ENCODE measurements at regions of chr2 and their contacts with region 1.

Region 1: DNA sequence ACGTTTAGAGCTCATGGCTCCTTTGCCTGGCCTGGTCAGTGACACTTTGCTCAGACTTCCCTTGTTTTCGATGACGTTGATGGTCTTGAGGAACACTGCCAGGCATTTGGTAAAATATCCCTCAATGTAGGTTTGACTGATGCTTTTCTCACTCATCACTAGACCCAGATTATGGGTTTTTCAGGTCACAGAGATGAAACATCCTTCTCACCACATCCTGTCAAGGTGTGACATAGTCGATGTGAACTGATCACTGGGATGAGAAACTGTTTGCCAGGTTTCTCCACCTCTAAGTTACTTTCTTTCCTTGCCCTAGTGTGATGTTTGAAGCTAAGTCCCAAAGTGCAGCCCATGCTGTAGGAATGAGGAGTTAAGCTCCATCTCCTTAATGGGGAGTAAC is 81.5 kb downstream of the AFF3 start:
- DNase-seq: peak; percentile 16
- H3K4me3 Mint-ChIP-seq: no peak overlapping the region
- H3K27ac Mint-ChIP-seq: peak overlapping the region; percentile 53
- H3K4me1 Mint-ChIP-seq: peaks cover 30% of the 10 kb centered on the region
- H3K27me3 Mint-ChIP-seq: peaks cover 9% of the 10 kb centered on the region

Region 2: GRCh38 chr2:100136310-100136709 is 75.4 kb after region 1 on chr2:
- CTCF ChIA-PET with region 1: no interaction called
- POLR2A ChIA-PET with region 1: no interaction called
- intact Hi-C with region 1: loop called (anchors 1 kb)
- DNase-seq: peak; percentile 15
- H3K4me3 Mint-ChIP-seq: no peak overlapping the region
- H3K27ac Mint-ChIP-seq: no peak overlapping the region
- H3K4me1 Mint-ChIP-seq: peaks cover 13% of the 10 kb centered on the region
- H3K27me3 Mint-ChIP-seq: peaks cover 18% of the 10 kb centered on the region

Region 3: GRCh38 chr2:100142393-100142792 is 81.5 kb after region 1 on chr2 and contains the start of gene AFF3:
- CTCF ChIA-PET with region 1: no interaction called
- POLR2A ChIA-PET with region 1: no interaction called
- intact Hi-C with region 1: loop called (anchors 2 kb)
- DNase-seq: peak; percentile 72
- H3K4me3 Mint-ChIP-seq: peak within 1 kb of the TSS; percentile 38
- H3K27ac Mint-ChIP-seq: peak within 1 kb of the TSS; percentile 46
- H3K4me1 Mint-ChIP-seq: peaks cover 33% of the 10 kb centered on the region
- H3K27me3 Mint-ChIP-seq: peaks cover 42% of the 10 kb centered on the region
- total RNA-seq, gene AFF3: 0.22 to 0.59 TPM

Region 4: GRCh38 chr2:100235098-100235497 is 174.2 kb after region 1 on chr2:
- CTCF ChIA-PET with region 1: no interaction called
- POLR2A ChIA-PET with region 1: no interaction called
- intact Hi-C with region 1: no loop called
- DNase-seq: peak; percentile 14
- H3K4me3 Mint-ChIP-seq: no peak overlapping the region
- H3K27ac Mint-ChIP-seq: no peak overlapping the region
- H3K4me1 Mint-ChIP-seq: peaks cover 10% of the 10 kb centered on the region
- H3K27me3 Mint-ChIP-seq: no peaks in the 10 kb centered on the region

Region 5: DNA sequence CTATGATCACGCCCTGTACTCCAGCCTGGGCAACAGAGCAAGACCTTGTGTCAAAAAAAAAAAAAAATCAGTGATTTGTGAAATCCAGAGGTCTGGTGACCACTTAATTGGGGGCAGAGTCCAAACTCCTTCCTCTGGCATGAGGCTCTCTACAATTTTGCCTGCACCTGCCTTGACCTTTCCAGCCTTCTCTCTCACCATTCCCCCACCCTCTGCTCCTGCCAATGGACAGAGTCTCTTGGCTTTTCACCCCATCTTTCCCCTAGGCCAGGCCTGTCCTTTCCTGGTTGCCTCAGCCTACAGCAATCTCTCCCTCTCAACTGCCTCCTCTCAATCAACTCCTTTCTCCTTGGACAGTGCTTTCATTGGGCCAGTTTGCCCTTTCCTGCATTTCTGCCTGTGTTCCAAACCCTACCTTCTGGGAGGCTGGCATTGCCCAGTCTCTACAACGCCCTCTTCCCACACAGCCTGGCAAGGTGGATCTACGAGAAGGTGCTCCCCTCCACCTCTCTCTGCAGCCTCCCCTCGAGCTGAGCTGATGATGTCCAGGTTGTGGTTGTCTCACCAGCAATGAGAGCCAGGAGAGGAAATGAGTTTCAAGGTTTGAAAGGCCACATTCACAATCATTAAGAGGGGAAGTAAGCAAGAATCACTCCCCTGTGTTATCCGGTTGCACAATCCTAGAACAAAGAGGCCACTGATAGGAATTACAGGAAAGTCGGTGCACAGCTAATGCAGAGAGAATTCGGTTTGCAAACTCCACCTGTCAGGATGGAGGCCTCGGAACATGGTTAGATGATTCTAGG is 719.5 kb after region 1 on chr2:
- CTCF ChIA-PET with region 1: no interaction called
- POLR2A ChIA-PET with region 1: no interaction called
- intact Hi-C with region 1: no loop called
- DNase-seq: no peak
- H3K4me3 Mint-ChIP-seq: no peak overlapping the region
- H3K27ac Mint-ChIP-seq: no peak overlapping the region
- H3K4me1 Mint-ChIP-seq: no peaks in the 10 kb centered on the region
- H3K27me3 Mint-ChIP-seq: peaks cover 2% of the 10 kb centered on the region

Measured in activated CD4-positive, alpha-beta memory T cell treated with anti-CD3 and anti-CD28 coated beads for 36 hours (primary cell).